A549 (cell line): ENCODE measurements at regions of chr3 and their contacts with region 1.

Region 1: DNA sequence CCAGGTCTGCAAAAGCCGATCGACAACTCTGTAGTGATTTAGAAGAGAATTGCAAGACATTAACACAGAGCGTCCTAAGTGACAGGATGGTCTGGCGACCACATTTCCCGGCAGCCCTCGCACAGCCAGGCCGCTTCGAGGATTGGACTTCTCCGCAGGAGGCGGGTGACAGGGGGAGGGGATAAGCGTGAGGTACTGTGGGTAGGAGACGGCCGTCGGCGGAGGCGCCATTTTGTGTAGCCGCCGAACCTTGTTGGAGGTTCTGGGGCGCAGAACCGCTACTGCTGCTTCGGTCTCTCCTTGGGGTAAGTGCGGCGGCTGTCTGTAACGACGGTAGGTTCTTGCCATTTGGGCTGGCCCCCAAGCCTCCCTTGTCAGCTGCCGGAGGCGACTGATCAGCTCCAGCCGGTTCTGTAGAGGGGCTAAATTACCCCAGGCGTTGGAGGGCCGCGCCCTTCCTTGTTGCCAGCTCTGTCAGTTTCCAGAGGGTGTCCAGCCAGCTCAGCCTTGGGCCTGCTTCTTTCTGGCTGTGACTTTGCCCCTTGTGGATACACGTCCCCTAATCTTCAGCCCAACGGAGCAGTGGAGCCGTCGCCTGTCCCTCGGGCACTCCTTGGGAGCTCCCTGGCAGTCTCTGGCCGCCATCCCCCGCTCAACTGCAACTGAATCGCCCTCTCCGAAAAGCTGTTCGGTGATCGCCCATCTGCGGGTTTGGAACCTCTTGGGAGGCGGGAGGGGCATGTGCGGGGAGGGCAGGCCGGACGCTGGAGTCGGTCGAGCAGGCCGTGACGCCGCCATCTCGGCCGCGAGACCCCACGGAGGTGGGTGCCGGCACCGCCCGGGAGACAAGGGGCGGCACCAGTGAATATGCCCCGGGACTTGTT is at the start of gene RBM5:
- DNase-seq: peak; percentile 91 to 92
- ATAC-seq: peak; percentile 100
- H3K4me3 ChIP-seq: peak within 1 kb of the TSS; percentile 79
- H3K27ac ChIP-seq: peak within 1 kb of the TSS; percentile 93 to 99
- H3K4me1 ChIP-seq: peaks cover 8% of the 10 kb centered on the region; the same call in 2 of the 3 replicates
- CTCF ChIP-seq: no peak
- EP300 ChIP-seq: no peak
- POLR2A ChIP-seq: peak; percentile 70
- RAD21 ChIP-seq: no peak
- polyA plus RNA-seq, gene RBM5: 92.1 and 123 TPM in 2 replicates

Region 2: DNA sequence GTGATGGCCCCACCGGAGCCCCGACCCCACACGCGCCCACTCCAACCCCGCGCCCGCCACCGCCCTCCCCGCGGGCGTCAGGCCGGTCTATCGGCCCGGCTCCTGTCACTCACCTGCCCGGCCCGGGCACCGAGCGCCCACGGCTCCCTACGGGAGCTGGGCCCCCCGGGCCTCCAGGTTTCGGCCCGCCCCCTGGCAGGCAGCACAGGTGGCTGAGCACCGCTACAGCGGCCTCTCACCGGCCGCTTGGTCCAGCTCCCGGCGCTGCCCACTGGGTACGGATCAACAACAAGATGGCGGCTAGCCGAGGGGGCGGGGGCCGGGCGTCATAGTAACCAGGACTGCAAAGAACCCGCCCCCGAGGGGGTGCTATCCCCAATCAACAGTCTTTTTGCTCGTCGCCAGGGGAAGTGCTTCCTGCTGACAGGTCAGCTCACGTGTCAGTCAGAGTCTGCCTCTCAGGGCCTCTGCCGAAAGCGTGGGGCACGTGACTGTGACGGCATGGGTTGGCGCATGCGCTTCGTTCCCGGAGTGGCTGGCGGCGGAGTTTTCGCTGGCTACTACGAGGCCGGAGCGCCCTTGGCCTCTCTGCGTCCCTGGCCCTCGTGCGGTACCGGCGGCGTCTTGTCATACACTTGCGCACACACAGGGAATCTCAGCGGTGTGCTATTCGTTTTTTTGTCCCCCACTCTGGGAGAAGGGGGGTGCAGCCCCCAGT is 302.6 kb before region 1 on chr3 and contains the start of gene IP6K1:
- CTCF ChIA-PET with region 1: no interaction called
- POLR2A ChIA-PET with region 1: interaction called, 10 read pairs
- DNase-seq: peak; percentile 98 to 99
- ATAC-seq: peak; percentile 98 to 99
- H3K4me3 ChIP-seq: peak within 1 kb of the TSS; percentile 82
- H3K27ac ChIP-seq: peak within 1 kb of the TSS; percentile 87 to 95
- H3K4me1 ChIP-seq: peaks cover 11% of the 10 kb centered on the region
- CTCF ChIP-seq: no peak
- EP300 ChIP-seq: no peak
- POLR2A ChIP-seq: peak; percentile 89
- RAD21 ChIP-seq: no peak
- polyA plus RNA-seq, gene IP6K1: 22.2 and 28.9 TPM in 2 replicates

Region 3: GRCh38 chr3:50068134-50068533 is 20.8 kb before region 1 on chr3:
- CTCF ChIA-PET with region 1: no interaction called
- POLR2A ChIA-PET with region 1: no interaction called
- DNase-seq: no peak
- ATAC-seq: no peak
- H3K4me3 ChIP-seq: no peak overlapping the region
- H3K27ac ChIP-seq: no peak overlapping the region
- H3K4me1 ChIP-seq: no peaks in the 10 kb centered on the region
- CTCF ChIP-seq: no peak
- EP300 ChIP-seq: no peak
- POLR2A ChIP-seq: no peak
- RAD21 ChIP-seq: no peak

Region 4: GRCh38 chr3:50587806-50588758 is 499.1 kb after region 1 on chr3:
- CTCF ChIA-PET with region 1: no interaction called
- POLR2A ChIA-PET with region 1: no interaction called
- DNase-seq: no peak
- ATAC-seq: no peak; a peak in 1 of 6 replicates
- H3K4me3 ChIP-seq: no peak overlapping the region
- H3K27ac ChIP-seq: no peak overlapping the region
- H3K4me1 ChIP-seq: peaks cover 14% of the 10 kb centered on the region
- CTCF ChIP-seq: no peak
- EP300 ChIP-seq: no peak
- POLR2A ChIP-seq: no peak
- RAD21 ChIP-seq: no peak